ENCODE measurements at regions of chr6 and their contacts with region 1.

Region 1: GRCh38 chr6:143842902-143843676 is at the start of gene LTV1:
- DNase-seq: peak; percentile 82 to 90 (median 88)
- ATAC-seq: peak; percentile 98
- H3K4me3 ChIP-seq: peak within 1 kb of the TSS; percentile 99
- H3K4me3 Mint-ChIP-seq: peak within 1 kb of the TSS; percentile 93 to 99 (median 96)
- H3K27ac ChIP-seq: peak within 1 kb of the TSS; percentile 92
- H3K27ac Mint-ChIP-seq: peak within 1 kb of the TSS; percentile 91 to 99 (median 97)
- H3K4me1 ChIP-seq: peaks cover 6 to 11% of the 10 kb centered on the region in 2 donors
- H3K4me1 Mint-ChIP-seq: peaks cover 19 to 42% (median 32%) of the 10 kb centered on the region in 7 donors
- H3K27me3 ChIP-seq: no peaks in the 10 kb centered on the region
- H3K27me3 Mint-ChIP-seq: no peaks in the 10 kb centered on the region
- total RNA-seq, gene LTV1: 16.5 to 29.6 (median 22.6) TPM

Region 2: DNA sequence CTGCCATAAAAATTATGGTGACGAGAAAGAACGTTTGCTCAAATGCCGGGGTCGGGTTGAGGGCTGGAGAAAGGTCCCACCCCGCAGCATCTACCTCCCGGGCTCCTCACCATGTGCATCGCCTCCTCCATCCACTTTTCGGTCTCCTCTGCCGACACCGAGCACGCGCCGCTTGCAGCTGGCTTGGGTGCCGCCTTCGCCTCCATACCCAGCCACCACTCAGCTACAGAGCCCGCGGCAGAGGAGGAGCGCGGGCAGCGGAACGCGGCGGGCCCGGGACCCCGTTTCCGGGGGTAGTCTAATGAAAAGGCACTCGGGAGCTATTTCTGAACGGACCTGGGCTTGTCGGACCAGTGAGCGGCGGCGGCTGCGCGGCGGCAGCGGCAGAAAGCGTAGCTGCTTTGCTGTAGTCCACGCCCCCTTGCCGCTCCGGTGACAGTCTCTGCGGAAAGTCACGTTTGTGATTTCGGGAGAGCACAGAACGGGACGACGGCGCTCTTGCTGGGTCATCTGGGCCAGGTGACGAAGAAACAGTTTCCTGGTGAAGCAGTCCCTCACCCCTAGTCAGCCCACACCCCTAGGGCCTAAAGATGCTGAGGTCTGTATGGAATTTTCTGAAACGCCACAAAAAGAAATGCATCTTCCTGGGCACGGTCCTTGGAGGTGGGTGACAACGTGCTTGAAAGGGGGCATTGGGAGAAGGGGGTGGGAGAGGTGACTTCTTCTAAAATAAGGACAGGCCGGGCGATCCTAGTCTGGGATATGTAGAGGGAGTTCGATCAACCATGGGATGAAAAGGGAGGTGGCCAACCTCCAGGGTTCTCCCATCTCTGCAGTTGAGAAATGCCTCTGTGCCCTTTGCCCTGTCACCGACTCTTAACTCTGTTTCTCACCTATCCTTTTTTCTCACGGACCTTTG is 392.4 kb before region 1 on chr6 and contains the starts of genes ADAT2 and PEX3:
- CTCF ChIA-PET with region 1: no interaction called
- POLR2A ChIA-PET with region 1: interaction called, 3 read pairs
- intact Hi-C with region 1: loop called (anchors 1 kb)
- DNase-seq: peak; percentile 87 to 95 (median 94)
- ATAC-seq: peak; percentile 98
- H3K4me3 ChIP-seq: peak within 1 kb of the TSS; percentile 89
- H3K4me3 Mint-ChIP-seq: peak within 1 kb of the TSS; percentile 84 to 100 (median 99)
- H3K27ac ChIP-seq: peak within 1 kb of the TSS; percentile 80
- H3K27ac Mint-ChIP-seq: peak within 1 kb of the TSS; percentile 93 to 99 (median 96)
- H3K4me1 ChIP-seq: peaks cover 14 to 18% of the 10 kb centered on the region in 2 donors
- H3K4me1 Mint-ChIP-seq: peaks cover 20 to 61% (median 49%) of the 10 kb centered on the region in 7 donors
- H3K27me3 ChIP-seq: no peaks in the 10 kb centered on the region
- H3K27me3 Mint-ChIP-seq: no peaks in the 10 kb centered on the region
- total RNA-seq, gene ADAT2: 18.4 to 25.8 (median 20.8) TPM
- total RNA-seq, gene PEX3: 10.9 to 28.8 (median 19.1) TPM

Region 3: GRCh38 chr6:143575440-143575839 is 267.6 kb before region 1 on chr6:
- CTCF ChIA-PET with region 1: interaction called, 3 read pairs
- POLR2A ChIA-PET with region 1: no interaction called
- intact Hi-C with region 1: loop called (anchors 1 to 5 kb)
- DNase-seq: peak in 8 of 9 donors; percentile 34 to 79 (median 67)
- ATAC-seq: peak; percentile 99
- H3K4me3 ChIP-seq: no peak overlapping the region
- H3K4me3 Mint-ChIP-seq: no peak overlapping the region
- H3K27ac ChIP-seq: no peak overlapping the region
- H3K27ac Mint-ChIP-seq: peak overlapping the region in 1 of 9 donors; percentile 15
- H3K4me1 ChIP-seq: no peaks in the 10 kb centered on the region
- H3K4me1 Mint-ChIP-seq: peaks cover 0 to 9% (median 0%) of the 10 kb centered on the region in 7 donors
- H3K27me3 ChIP-seq: no peaks in the 10 kb centered on the region
- H3K27me3 Mint-ChIP-seq: no peaks in the 10 kb centered on the region

Region 4: DNA sequence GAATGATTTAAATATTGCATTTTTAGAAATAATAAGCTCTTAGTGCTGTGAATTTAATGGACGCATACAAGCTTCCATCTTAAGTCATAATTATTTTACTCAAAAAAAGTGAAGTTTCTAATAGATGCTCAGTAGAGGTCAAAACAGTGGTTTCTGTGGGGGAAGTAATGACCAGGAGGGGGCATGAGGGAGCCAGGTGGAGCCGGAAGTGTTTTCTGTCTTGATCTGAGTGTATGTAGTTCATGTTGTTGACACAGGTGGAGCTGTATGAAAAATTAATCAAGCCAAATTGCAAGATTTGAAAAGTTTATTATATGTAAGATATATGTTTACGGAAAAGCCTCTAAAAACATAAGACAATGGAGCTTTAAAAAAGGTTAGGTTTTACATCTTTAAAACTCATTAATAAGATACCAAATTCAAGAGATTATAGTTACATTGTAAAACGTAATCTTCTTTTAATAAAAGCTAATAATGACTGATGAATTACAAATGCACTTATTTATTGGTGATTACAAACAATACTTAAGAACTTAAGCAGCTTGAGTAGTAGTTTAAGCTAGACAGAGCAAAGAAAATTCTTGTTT is 97.0 kb after region 1 on chr6:
- CTCF ChIA-PET with region 1: interaction called, 4 read pairs
- POLR2A ChIA-PET with region 1: no interaction called
- intact Hi-C with region 1: loop called (anchors 2 kb)
- DNase-seq: peak in 7 of 9 donors; percentile 44 to 69 (median 54)
- ATAC-seq: peak; percentile 96
- H3K4me3 ChIP-seq: no peak overlapping the region
- H3K4me3 Mint-ChIP-seq: no peak overlapping the region
- H3K27ac ChIP-seq: no peak overlapping the region
- H3K27ac Mint-ChIP-seq: no peak overlapping the region
- H3K4me1 ChIP-seq: no peaks in the 10 kb centered on the region
- H3K4me1 Mint-ChIP-seq: peaks cover 0 to 16% (median 6%) of the 10 kb centered on the region in 7 donors
- H3K27me3 ChIP-seq: no peaks in the 10 kb centered on the region
- H3K27me3 Mint-ChIP-seq: peaks cover 0 to 7% (median 0%) of the 10 kb centered on the region in 5 donors

Region 5: DNA sequence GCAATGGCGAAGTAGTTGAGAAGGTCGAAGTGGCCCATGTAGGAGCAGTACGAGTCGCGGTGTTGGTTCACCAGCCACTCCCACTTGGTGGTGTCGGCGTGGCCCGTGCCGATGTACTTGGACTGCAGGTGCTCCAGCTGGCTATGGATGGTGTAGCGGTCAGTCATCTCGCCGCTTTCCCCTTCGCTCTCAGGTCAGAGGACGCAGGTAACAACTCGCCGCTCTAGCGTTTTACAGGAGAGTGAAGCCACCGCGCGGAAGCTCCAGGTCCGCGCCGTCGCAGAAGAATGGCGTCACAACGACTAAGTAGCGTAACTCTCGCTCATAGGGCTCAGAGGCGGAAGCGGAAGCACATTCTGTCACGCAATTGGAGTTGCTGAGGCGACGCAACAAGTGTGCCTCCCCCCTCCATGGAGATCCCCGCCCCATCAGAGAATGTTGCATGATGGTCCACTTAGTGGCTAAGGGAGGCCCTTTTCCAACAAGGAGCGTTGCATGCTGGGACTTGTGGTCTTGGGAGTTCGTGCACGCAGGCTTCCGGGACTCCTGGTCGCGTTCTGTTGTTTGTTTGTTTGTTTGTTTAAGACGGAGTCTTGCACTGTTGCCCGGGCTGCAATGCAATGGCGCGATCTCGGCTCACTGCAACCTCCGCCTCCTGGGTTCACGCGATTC is 252.4 kb after region 1 on chr6 and contains the start of gene SF3B5:
- CTCF ChIA-PET with region 1: no interaction called
- POLR2A ChIA-PET with region 1: interaction called, 5 read pairs
- intact Hi-C with region 1: loop called (anchors 1 kb)
- DNase-seq: peak; percentile 86 to 99 (median 97)
- ATAC-seq: peak; percentile 98
- H3K4me3 ChIP-seq: peak within 1 kb of the TSS; percentile 98
- H3K4me3 Mint-ChIP-seq: peak within 1 kb of the TSS; percentile 93 to 100 (median 98)
- H3K27ac ChIP-seq: peak within 1 kb of the TSS; percentile 92
- H3K27ac Mint-ChIP-seq: peak within 1 kb of the TSS; percentile 96 to 100 (median 98)
- H3K4me1 ChIP-seq: peaks cover 13 to 14% of the 10 kb centered on the region in 2 donors
- H3K4me1 Mint-ChIP-seq: peaks cover 15 to 38% (median 32%) of the 10 kb centered on the region in 7 donors
- H3K27me3 ChIP-seq: no peaks in the 10 kb centered on the region
- H3K27me3 Mint-ChIP-seq: peaks cover 0 to 10% (median 0%) of the 10 kb centered on the region in 5 donors
- total RNA-seq, gene SF3B5: 89.2 to 155 (median 122) TPM

Region 6: GRCh38 chr6:145814501-145815308 is 1971.6 kb after region 1 on chr6 and contains the start of gene FBXO30:
- CTCF ChIA-PET with region 1: no interaction called
- POLR2A ChIA-PET with region 1: no interaction called
- intact Hi-C with region 1: loop called in 1 of 2 experiments (anchors 5 kb)
- DNase-seq: peak; percentile 81 to 94 (median 88)
- ATAC-seq: peak; percentile 98
- H3K4me3 ChIP-seq: peak within 1 kb of the TSS; percentile 92
- H3K4me3 Mint-ChIP-seq: peak within 1 kb of the TSS; percentile 91 to 96 (median 94)
- H3K27ac ChIP-seq: peak within 1 kb of the TSS; percentile 80
- H3K27ac Mint-ChIP-seq: peak within 1 kb of the TSS; percentile 83 to 96 (median 95)
- H3K4me1 ChIP-seq: peaks cover 0 to 18% of the 10 kb centered on the region in 2 donors
- H3K4me1 Mint-ChIP-seq: peaks cover 25 to 50% (median 41%) of the 10 kb centered on the region in 7 donors
- H3K27me3 ChIP-seq: no peaks in the 10 kb centered on the region
- H3K27me3 Mint-ChIP-seq: peaks cover 0 to 3% (median 0%) of the 10 kb centered on the region in 5 donors
- total RNA-seq, gene FBXO30: 1.6 to 5.1 (median 4.8) TPM